ENCODE measurements at regions of chr11 and their contacts with region 1.

Region 1: DNA sequence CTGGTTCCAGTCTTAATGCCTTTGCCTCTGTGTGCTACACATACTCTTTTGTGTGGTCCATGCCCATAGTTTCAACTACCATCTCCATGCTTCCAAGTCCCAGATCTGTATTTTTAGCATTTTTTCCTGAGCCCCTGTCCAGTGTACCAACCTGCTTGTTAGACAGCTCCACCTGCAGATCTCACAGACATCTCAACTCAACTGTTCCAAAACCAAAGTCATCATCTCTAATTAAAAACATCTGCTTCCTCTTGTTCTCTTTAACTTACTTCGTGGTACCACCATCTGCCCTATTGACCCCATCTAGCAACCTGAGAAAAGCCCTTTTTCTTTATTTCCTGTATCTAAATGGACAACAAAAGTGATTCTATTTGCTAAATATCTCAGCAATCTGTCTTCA is 8.6 kb upstream of the KMT2A start:
- DNase-seq: no peak
- H3K4me3 ChIP-seq: no peak overlapping the region
- H3K27ac ChIP-seq: no peak overlapping the region
- H3K4me1 ChIP-seq: peaks cover 11% of the 10 kb centered on the region
- H3K27me3 ChIP-seq: no peaks in the 10 kb centered on the region
- CTCF ChIP-seq: no peak

Region 2: GRCh38 chr11:118098996-118099837 is 328.5 kb before region 1 on chr11:
- CTCF ChIA-PET with region 1: no interaction called
- dilution Hi-C with region 1: no loop called
- in situ Hi-C with region 1: no loop called
- intact Hi-C with region 1: no loop called
- DNase-seq: no peak
- H3K4me3 ChIP-seq: no peak overlapping the region
- H3K27ac ChIP-seq: no peak overlapping the region
- H3K4me1 ChIP-seq: no peaks in the 10 kb centered on the region
- H3K27me3 ChIP-seq: no peaks in the 10 kb centered on the region
- CTCF ChIP-seq: no peak

Region 3: DNA sequence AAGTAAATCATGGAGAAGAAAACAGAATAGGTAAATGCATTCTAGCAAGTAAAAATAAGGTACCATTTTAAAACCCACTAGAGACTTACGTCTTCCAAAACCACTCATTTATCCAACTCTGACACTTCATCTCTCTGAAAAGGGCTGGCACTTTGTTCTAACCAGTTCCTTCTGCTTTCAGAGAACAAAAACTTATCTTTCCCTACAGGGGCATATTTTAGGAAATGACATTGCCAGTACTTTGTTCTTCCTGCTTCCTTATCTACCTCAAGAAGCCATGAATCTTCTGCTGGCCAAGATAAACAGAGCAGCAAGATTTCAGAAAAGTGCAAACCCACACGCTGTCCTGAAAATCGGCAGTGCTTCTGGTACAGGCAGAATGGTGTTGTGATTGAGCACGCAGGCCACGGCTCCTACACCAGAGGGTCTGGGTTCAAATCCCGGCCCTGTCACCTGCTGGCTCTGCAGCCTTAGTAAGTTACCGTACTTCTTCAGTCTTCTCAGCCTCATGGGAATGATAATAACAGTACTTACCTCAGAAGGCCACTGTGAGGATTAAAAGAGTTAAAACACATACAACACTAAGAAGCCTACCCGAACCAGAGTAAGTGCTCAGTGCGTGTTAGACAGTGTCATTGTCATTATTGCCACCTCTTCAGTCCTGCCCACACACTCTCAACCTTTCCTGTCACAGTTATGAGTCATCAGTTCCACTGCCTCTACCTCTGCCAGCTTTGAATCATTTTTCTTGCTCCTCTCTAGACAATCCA is 186.5 kb before region 1 on chr11:
- CTCF ChIA-PET with region 1: no interaction called
- dilution Hi-C with region 1: no loop called
- in situ Hi-C with region 1: no loop called
- intact Hi-C with region 1: no loop called
- DNase-seq: peak; percentile 88
- H3K4me3 ChIP-seq: no peak overlapping the region
- H3K27ac ChIP-seq: peak overlapping the region; percentile 72
- H3K4me1 ChIP-seq: peaks cover 18% of the 10 kb centered on the region
- H3K27me3 ChIP-seq: no peaks in the 10 kb centered on the region
- CTCF ChIP-seq: no peak

Region 4: DNA sequence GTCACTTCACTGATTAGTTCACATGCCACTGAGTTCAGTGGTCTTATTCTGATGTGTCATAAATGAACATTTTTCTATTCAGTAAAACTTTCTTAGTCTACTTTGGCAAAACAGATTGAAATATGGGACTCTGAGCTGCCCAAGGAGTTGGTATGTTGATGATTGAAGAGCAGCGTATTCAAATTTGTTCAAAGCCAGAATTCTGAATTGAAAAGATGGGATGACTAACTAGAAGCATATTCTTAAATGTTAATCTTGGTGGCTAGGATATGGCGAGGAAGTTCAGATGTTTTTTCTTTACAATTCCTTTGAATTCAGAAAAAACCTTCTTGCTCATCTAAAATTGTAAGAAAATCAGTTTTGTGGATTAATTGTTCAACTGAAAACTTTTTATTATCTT is 43.3 kb after region 1 on chr11:
- CTCF ChIA-PET with region 1: no interaction called
- dilution Hi-C with region 1: loop called (anchors 5 kb)
- in situ Hi-C with region 1: no loop called
- intact Hi-C with region 1: no loop called
- DNase-seq: no peak
- H3K4me3 ChIP-seq: no peak overlapping the region
- H3K27ac ChIP-seq: no peak overlapping the region
- H3K4me1 ChIP-seq: no peaks in the 10 kb centered on the region
- H3K27me3 ChIP-seq: no peaks in the 10 kb centered on the region
- CTCF ChIP-seq: no peak

Measured in mammary epithelial cell (primary cell).